Heart right ventricle (tissue), 16 donors: ENCODE measurements at regions of chr18 and their contacts with region 1.

Region 1: DNA sequence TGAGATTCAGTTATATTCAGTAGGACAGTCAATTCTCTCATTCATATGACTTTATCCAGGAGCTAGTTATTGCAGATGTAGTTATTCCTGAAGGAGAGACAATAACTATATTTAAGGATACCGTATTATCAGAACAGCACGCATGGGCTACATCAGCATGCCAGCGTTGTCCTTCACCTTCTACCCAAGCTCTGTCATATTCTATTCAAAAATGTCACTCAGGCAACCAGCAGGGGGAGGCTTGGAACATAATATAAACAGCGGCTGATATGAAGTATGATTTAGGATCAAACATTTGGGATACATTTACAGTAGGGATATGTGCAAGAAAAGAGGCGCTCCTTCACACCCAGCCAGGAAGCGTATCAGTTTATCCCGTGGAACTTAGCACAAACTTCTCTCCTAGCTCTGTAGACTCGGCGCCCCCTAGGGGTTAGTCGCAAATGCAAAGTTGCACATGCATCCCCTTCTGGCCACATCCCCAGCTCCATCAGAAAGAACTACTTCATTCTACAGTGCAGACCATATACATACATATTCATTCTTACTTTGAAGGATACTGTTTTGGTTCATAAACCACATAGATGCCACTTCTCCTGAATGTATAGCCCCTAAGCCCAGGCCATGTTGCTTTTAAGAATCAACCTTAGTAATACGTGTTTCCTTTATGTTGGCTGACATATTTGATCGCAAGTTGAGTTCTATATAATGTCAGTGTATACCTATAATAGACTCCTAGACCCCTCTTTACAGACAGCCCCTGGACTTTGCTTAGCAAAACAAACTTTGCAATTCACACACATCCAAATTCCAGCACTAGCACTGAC is 759.4 kb downstream of the ADCYAP1 start:
- DNase-seq: peak; percentile 15 to 35
- ATAC-seq: peak in 4 of 8 donors; percentile 23 to 43 (median 32)
- H3K4me3 ChIP-seq: no peak overlapping the region
- H3K27ac ChIP-seq: no peak overlapping the region
- H3K4me1 ChIP-seq: peaks cover 0 to 10% (median 4%) of the 10 kb centered on the region in 9 donors
- H3K27me3 ChIP-seq: no peaks in the 10 kb centered on the region
- CTCF ChIP-seq: peak in 8 of 9 donors; percentile 30 to 72 (median 50)

Region 2: DNA sequence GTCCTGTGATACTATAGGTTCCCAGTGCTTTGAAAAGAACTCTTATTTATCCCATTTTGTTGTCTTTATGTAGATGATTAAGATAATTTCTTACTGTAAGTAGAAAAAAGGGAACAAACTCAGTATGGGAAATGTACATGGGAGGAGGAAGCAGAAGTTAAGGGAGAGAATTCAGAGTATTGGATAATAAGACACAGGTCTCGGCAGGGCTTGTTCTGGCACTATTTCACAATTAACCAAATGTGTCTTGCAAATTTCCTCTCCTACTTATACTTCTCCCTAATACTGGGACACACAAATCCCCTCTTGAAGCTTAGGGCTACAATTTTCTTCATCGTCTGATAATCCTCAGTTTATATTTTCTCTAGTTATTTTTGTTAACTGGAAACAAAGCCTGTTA is 15.4 kb before region 1 on chr18:
- intact Hi-C with region 1: no loop called
- DNase-seq: no peak
- ATAC-seq: peak in 3 of 8 donors; percentile 34 to 53 (median 49)
- H3K4me3 ChIP-seq: no peak overlapping the region
- H3K27ac ChIP-seq: peak overlapping the region in 1 of 10 donors; percentile 66
- H3K4me1 ChIP-seq: no peaks in the 10 kb centered on the region
- H3K27me3 ChIP-seq: no peaks in the 10 kb centered on the region
- CTCF ChIP-seq: no peak

Region 3: GRCh38 chr18:1779587-1779986 is 115.5 kb after region 1 on chr18:
- intact Hi-C with region 1: loop called in 3 of 10 experiments (anchors 2 to 5 kb)
- DNase-seq: no peak
- ATAC-seq: peak in 4 of 8 donors; percentile 22 to 57 (median 38)
- H3K4me3 ChIP-seq: no peak overlapping the region
- H3K27ac ChIP-seq: peak overlapping the region in 8 of 10 donors; percentile 56 to 78 (median 72)
- H3K4me1 ChIP-seq: peaks cover 0 to 31% (median 15%) of the 10 kb centered on the region in 9 donors
- H3K27me3 ChIP-seq: no peaks in the 10 kb centered on the region
- CTCF ChIP-seq: no peak

Region 4: GRCh38 chr18:2846636-2847364 is 1182.7 kb after region 1 on chr18 and contains the start of gene EMILIN2:
- intact Hi-C with region 1: no loop called
- DNase-seq: peak; percentile 71 to 72
- ATAC-seq: peak; percentile 38 to 66 (median 45)
- H3K4me3 ChIP-seq: peak within 1 kb of the TSS; percentile 33 to 76 (median 58)
- H3K27ac ChIP-seq: peak within 1 kb of the TSS in 9 of 10 donors; percentile 20 to 95 (median 73)
- H3K4me1 ChIP-seq: peaks cover 0 to 50% (median 26%) of the 10 kb centered on the region in 9 donors
- H3K27me3 ChIP-seq: peaks cover 4 to 56% (median 29%) of the 10 kb centered on the region in 7 donors
- CTCF ChIP-seq: peak in 2 of 9 donors; percentile 4 to 6
- total RNA-seq, gene EMILIN2: 9.5 to 50.5 (median 19.6) TPM